ENCODE measurements at regions of chr10 and their contacts with region 1.

Region 1: DNA sequence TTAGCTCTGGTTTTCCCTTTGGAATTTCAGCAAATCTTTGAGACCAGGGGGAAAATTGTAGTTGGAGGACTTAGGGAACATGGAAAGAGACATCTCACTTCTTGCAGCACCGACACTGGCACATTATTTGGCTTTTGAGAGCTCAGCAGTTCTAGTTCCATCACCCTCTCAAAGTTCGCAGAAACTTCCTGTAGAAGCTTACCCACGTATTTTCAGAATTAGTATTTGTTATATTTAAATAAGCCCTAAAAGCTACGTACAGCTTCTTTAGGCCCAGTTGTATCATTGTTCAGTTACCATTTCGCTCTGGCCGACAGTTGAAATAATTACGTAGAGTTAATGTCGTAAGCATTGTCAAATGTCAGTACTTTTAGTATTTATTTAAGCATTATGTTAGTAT is 13.4 kb downstream of the CEP55 start:
- DNase-seq: no peak
- CTCF ChIP-seq: no peak

Region 2: DNA sequence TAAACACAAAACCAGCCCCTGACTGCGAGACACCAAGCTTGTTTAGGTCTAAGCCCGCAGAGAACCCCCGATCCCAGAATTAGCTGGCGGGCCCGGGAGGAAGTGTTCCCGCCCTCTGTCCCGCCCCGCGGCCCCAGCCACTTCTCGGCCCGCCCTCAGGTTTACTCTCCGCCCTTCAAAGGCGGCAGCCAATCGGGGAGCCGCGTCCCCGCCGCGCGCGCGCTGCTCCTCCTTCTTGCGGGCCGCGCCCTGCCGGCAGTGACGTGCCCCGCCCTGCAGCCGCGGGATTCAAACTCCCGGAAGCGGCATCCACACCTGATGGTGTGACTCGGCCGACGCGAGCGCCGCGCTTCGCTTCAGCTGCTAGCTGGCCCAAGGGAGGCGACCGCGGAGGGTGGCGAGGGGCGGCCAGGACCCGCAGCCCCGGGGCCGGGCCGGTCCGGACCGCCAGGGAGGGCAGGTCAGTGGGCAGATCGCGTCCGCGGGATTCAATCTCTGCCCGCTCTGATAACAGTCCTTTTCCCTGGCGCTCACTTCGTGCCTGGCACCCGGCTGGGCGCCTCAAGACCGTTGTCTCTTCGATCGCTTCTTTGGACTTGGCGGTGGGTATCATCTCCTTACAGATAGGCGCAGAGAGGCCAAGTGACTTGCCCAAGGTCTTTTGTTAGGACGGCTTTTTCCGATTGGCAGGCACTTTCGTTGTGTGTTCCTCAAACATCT is 13.3 kb before region 1 on chr10 and contains the start of gene CEP55:
- CTCF ChIA-PET with region 1: interaction called, 45 read pairs
- POLR2A ChIA-PET with region 1: no interaction called
- DNase-seq: peak; percentile 96
- CTCF ChIP-seq: no peak